Endothelial cell of umbilical vein (primary cell): ENCODE measurements at regions of chr7 and their contacts with region 1.

Region 1: GRCh38 chr7:90690159-90690858 is 94.2 kb downstream of the CDK14 start:
- DNase-seq: no peak
- H3K4me3 ChIP-seq: no peak overlapping the region
- H3K27ac ChIP-seq: no peak overlapping the region
- H3K4me1 ChIP-seq: peaks cover 8% of the 10 kb centered on the region
- H3K27me3 ChIP-seq: no peaks in the 10 kb centered on the region
- CTCF ChIP-seq: no peak
- POLR2A ChIP-seq: no peak

Region 2: GRCh38 chr7:90655566-90655965 is 34.7 kb before region 1 on chr7:
- CTCF ChIA-PET with region 1: no interaction called
- POLR2A ChIA-PET with region 1: no interaction called
- dilution Hi-C with region 1: no loop called
- intact Hi-C with region 1: loop called (anchors 5 kb)
- DNase-seq: peak; percentile 85
- H3K4me3 ChIP-seq: no peak overlapping the region
- H3K27ac ChIP-seq: peak overlapping the region; percentile 44
- H3K4me1 ChIP-seq: peaks cover 22% of the 10 kb centered on the region
- H3K27me3 ChIP-seq: no peaks in the 10 kb centered on the region
- CTCF ChIP-seq: no peak
- POLR2A ChIP-seq: no peak